ENCODE measurements at regions of chr12 and their contacts with region 1.

Region 1: GRCh38 chr12:89891933-89892332 is 183.3 kb upstream of the ATP2B1 start:
- DNase-seq: no peak
- ATAC-seq: no peak
- H3K4me3 ChIP-seq: no peak overlapping the region
- H3K27ac ChIP-seq: no peak overlapping the region
- H3K4me1 ChIP-seq: peaks cover 2% of the 10 kb centered on the region; the same call in 1 of the 2 replicates
- H3K27me3 ChIP-seq: no peaks in the 10 kb centered on the region
- CTCF ChIP-seq: no peak
- POLR2A ChIP-seq: no peak
- RAD21 ChIP-seq: no peak

Region 2: DNA sequence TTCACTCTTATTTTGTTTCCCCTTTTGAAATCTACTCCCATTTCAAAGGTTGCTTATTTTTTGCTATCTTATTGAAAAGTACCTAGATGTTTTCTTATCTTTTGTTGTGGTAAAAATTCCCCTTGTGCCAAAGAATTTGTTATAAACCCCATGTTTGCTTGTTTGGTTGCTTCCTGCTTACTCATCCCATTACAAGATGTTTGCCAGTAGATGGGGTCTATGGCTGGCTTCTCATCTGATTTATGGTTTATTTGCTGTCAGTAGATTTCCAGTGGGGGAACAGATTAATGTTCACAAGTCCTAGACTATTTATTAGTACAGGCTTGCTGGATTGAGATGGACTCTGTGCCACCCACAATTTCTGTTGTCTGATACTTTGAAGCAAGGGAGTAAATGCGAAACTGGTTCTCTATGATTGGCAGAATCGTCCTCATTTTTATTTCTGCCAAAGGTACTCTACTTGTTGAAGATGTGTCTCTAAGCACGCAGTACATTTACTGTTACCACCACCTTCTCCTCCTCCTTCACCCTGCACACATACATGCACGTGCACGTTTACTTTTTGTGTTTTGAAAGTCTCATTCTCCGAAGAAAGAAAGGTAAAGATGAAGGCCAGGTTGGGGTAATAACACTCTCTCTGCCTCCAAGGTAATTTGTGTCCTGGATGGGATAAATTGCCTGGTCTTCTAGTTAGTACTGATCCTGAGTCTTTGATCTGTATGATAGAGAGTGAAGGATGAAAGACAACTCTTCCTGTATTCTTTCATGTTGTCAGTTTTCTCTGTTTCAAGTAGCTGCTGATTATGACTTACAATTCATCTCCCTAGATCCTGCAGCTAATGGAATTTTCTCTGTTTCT is 66.1 kb before region 1 on chr12:
- CTCF ChIA-PET with region 1: no interaction called
- POLR2A ChIA-PET with region 1: no interaction called
- dilution Hi-C with region 1: no loop called
- in situ Hi-C with region 1: no loop called
- intact Hi-C with region 1: no loop called
- DNase-seq: peak; percentile 4
- ATAC-seq: no peak
- H3K4me3 ChIP-seq: no peak overlapping the region
- H3K27ac ChIP-seq: no peak overlapping the region
- H3K4me1 ChIP-seq: no peaks in the 10 kb centered on the region
- H3K27me3 ChIP-seq: no peaks in the 10 kb centered on the region
- CTCF ChIP-seq: no peak
- POLR2A ChIP-seq: no peak
- RAD21 ChIP-seq: no peak

Region 3: DNA sequence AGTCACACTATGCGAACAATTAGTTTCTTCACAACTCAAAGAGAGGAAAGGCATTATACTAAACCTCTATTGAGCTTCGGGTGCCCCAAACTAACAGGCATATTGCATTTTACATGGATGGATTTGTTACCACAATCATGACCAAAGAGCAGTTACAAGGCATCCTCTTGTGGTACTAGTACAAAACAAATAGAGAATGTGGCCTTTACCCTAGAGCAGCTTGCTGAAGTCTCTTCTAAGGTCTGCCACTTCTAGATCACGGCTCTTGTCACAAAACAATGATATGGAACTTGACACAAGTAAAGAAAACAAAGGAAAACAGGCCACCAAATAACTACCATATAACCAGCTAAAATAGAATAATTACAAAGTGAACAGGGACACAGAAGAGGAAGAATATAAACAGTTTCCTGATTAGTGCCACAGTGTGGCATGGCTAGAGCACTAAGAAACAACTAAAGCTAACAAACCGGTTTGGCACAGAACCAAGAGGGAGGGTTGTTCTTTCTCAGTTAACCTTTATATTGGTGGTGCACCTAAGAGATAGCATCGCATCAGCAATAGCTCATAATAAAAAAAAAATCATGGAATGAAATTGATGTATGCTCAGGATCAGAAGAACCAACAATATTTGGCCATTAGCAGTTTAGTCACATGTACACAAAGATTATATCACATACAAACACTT is 26.4 kb after region 1 on chr12:
- CTCF ChIA-PET with region 1: interaction called, 10 read pairs
- POLR2A ChIA-PET with region 1: no interaction called
- dilution Hi-C with region 1: no loop called
- in situ Hi-C with region 1: no loop called
- intact Hi-C with region 1: no loop called
- DNase-seq: no peak
- ATAC-seq: no peak
- H3K4me3 ChIP-seq: no peak overlapping the region
- H3K27ac ChIP-seq: no peak overlapping the region
- H3K4me1 ChIP-seq: no peaks in the 10 kb centered on the region
- H3K27me3 ChIP-seq: no peaks in the 10 kb centered on the region
- CTCF ChIP-seq: no peak
- POLR2A ChIP-seq: no peak
- RAD21 ChIP-seq: no peak

Measured in IMR-90 (cell line).